Activated CD8-positive, alpha-beta T cell treated with anti-CD3 and anti-CD28 coated beads for 36 hours (primary cell): ENCODE measurements at regions of chr9 and their contacts with region 1.

Region 1: DNA sequence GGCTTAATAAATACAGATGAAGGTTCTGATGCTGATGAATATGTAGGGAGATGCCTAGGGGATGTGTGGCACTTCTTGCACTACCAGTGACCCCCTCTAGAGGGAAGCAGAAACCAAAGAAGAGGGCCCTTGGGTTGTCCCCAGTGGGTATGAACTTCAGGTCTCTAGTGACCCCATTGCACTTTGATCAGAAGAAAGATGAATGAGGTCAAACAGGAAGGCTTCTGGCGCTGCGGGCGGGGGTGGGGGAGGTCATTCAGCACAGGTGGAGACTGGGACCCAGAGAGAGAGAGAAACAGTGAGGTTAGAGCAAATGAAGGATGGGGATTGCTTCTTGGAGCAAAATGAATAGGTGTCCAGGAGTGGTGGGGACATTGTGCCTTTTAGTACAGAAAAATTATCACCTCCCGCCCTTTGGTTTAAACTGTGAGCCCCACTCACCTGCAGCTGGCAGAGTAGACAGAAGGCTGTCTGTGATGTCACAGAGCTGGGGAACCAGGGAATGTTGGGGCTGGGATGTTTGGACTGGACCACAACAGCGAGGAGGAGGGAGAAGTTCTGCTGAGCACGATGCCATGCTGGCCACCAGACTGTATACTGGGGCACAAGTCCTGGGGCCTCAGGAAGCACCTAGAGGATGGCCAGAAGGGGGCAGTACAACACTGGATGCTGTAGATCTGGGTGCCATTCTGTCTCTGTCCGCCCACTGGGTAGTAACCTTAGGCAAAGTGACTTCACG is at the start of gene TEX48:
- DNase-seq: peak; percentile 92
- ATAC-seq: peak; percentile 90
- H3K4me3 Mint-ChIP-seq: no peak within 1 kb of the TSS
- H3K27ac Mint-ChIP-seq: peak within 1 kb of the TSS; percentile 89
- H3K4me1 Mint-ChIP-seq: peaks cover 69% of the 10 kb centered on the region
- H3K27me3 Mint-ChIP-seq: peaks cover 11% of the 10 kb centered on the region
- CTCF ChIP-seq: peak; percentile 81
- total RNA-seq, gene TEX48: 0.65 TPM in 1 of 2 experiments, not detected in the other

Region 2: GRCh38 chr9:114405294-114406034 is 276.3 kb before region 1 on chr9:
- CTCF ChIA-PET with region 1: interaction called, 14 read pairs
- POLR2A ChIA-PET with region 1: no interaction called
- intact Hi-C with region 1: no loop called
- DNase-seq: peak; percentile 88
- ATAC-seq: peak; percentile 98
- H3K4me3 Mint-ChIP-seq: no peak overlapping the region
- H3K27ac Mint-ChIP-seq: no peak overlapping the region
- H3K4me1 Mint-ChIP-seq: peaks cover 2% of the 10 kb centered on the region
- H3K27me3 Mint-ChIP-seq: no peaks in the 10 kb centered on the region
- CTCF ChIP-seq: peak; percentile 87

Region 3: GRCh38 chr9:114472765-114473446 is 208.9 kb before region 1 on chr9:
- CTCF ChIA-PET with region 1: no interaction called
- POLR2A ChIA-PET with region 1: no interaction called
- intact Hi-C with region 1: no loop called
- DNase-seq: no peak
- ATAC-seq: no peak
- H3K4me3 Mint-ChIP-seq: no peak overlapping the region
- H3K27ac Mint-ChIP-seq: no peak overlapping the region
- H3K4me1 Mint-ChIP-seq: peaks cover 17% of the 10 kb centered on the region
- H3K27me3 Mint-ChIP-seq: peaks cover 5% of the 10 kb centered on the region
- CTCF ChIP-seq: no peak

Region 4: GRCh38 chr9:114696814-114697544 is 15.2 kb after region 1 on chr9:
- CTCF ChIA-PET with region 1: interaction called, 43 read pairs
- POLR2A ChIA-PET with region 1: interaction called, 23 read pairs
- intact Hi-C with region 1: no loop called
- DNase-seq: peak; percentile 94
- ATAC-seq: peak; percentile 67
- H3K4me3 Mint-ChIP-seq: peak overlapping the region; percentile 63
- H3K27ac Mint-ChIP-seq: peak overlapping the region; percentile 95
- H3K4me1 Mint-ChIP-seq: peaks cover 78% of the 10 kb centered on the region
- H3K27me3 Mint-ChIP-seq: no peaks in the 10 kb centered on the region
- CTCF ChIP-seq: no peak

Region 5: DNA sequence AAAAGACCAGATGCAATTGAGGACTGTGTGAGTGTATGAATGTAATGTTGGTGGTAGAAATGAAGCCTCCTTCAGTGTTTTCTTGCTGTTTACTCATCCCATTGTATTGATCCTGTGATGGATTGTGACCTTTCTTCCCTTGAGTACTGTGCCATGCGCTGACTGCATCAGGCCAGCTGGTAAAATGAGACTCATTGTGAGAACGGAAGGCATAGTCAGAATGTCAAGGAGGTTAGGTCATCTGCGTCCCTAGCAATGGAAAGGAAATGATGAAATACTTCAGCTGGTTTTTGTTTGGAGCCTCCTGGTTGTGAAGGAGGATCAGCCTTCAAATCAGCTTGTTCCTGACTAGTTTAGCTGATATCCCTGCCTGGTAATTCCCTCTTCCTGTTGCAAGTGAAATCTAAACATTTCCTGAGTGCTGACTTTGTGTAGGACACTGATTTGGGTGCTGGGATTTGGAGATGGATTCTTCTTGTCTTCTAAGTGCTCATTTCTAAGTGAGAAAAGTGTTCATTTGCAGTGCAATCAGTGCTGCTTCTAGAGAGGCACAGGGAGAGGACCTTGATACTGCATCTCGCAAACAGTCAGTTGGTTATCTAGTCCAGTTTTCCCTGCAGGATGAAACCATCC is 213.2 kb after region 1 on chr9:
- CTCF ChIA-PET with region 1: interaction called, 18 read pairs
- POLR2A ChIA-PET with region 1: interaction called, 3 read pairs
- intact Hi-C with region 1: no loop called
- DNase-seq: peak; percentile 78
- ATAC-seq: peak; percentile 65
- H3K4me3 Mint-ChIP-seq: no peak overlapping the region
- H3K27ac Mint-ChIP-seq: peak overlapping the region; percentile 86
- H3K4me1 Mint-ChIP-seq: peaks cover 54% of the 10 kb centered on the region
- H3K27me3 Mint-ChIP-seq: no peaks in the 10 kb centered on the region
- CTCF ChIP-seq: no peak

Region 6: GRCh38 chr9:114919611-114920010 is 237.8 kb after region 1 on chr9:
- CTCF ChIA-PET with region 1: interaction called, 23 read pairs
- POLR2A ChIA-PET with region 1: no interaction called
- intact Hi-C with region 1: no loop called
- DNase-seq: peak; percentile 43
- ATAC-seq: peak; percentile 77
- H3K4me3 Mint-ChIP-seq: peak overlapping the region; percentile 11
- H3K27ac Mint-ChIP-seq: peak overlapping the region; percentile 83
- H3K4me1 Mint-ChIP-seq: peaks cover 85% of the 10 kb centered on the region
- H3K27me3 Mint-ChIP-seq: no peaks in the 10 kb centered on the region
- CTCF ChIP-seq: no peak

Region 7: DNA sequence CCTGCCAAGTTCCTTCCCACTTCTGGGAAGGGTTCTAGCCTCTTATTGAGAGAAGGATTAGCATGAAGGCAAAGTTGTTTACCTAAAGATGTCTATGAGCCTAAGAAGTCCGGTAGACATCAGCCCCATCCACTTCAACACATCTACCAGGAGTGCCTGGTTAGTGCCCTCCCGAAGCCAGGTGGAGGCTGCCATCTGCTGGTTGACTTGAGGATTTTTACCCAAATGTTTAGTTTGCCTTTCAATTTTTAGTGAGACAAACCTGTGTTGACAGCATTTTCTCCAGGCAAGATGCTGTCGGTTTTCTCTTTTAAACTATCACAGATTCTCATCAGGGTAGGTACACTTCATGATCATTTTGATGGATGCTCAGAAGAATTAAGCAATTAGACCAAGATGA is 332.2 kb after region 1 on chr9:
- CTCF ChIA-PET with region 1: interaction called, 117 read pairs
- POLR2A ChIA-PET with region 1: interaction called, 5 read pairs
- intact Hi-C with region 1: loop called (anchors 1 kb)
- DNase-seq: peak; percentile 80
- ATAC-seq: peak; percentile 87
- H3K4me3 Mint-ChIP-seq: no peak overlapping the region
- H3K27ac Mint-ChIP-seq: peak overlapping the region; percentile 36
- H3K4me1 Mint-ChIP-seq: peaks cover 40% of the 10 kb centered on the region
- H3K27me3 Mint-ChIP-seq: no peaks in the 10 kb centered on the region
- CTCF ChIP-seq: peak; percentile 72